ENCODE measurements at regions of chr9 and their contacts with region 1.

Region 1: GRCh38 chr9:129968690-129969501 is 74.1 kb downstream of the FNBP1 start:
- DNase-seq: peak; percentile 84
- H3K4me3 ChIP-seq: no peak overlapping the region
- H3K27ac ChIP-seq: peak overlapping the region; percentile 100
- H3K4me1 ChIP-seq: peaks cover 68% of the 10 kb centered on the region
- H3K27me3 ChIP-seq: no peaks in the 10 kb centered on the region
- CTCF ChIP-seq: no peak

Region 2: GRCh38 chr9:129900263-129901027 is 68.5 kb before region 1 on chr9:
- CTCF ChIA-PET with region 1: no interaction called
- POLR2A ChIA-PET with region 1: no interaction called
- intact Hi-C with region 1: loop called (anchors 5 kb)
- DNase-seq: no peak
- H3K4me3 ChIP-seq: no peak overlapping the region
- H3K27ac ChIP-seq: peak overlapping the region; percentile 57
- H3K4me1 ChIP-seq: peaks cover 11% of the 10 kb centered on the region
- H3K27me3 ChIP-seq: no peaks in the 10 kb centered on the region
- CTCF ChIP-seq: no peak

Region 3: DNA sequence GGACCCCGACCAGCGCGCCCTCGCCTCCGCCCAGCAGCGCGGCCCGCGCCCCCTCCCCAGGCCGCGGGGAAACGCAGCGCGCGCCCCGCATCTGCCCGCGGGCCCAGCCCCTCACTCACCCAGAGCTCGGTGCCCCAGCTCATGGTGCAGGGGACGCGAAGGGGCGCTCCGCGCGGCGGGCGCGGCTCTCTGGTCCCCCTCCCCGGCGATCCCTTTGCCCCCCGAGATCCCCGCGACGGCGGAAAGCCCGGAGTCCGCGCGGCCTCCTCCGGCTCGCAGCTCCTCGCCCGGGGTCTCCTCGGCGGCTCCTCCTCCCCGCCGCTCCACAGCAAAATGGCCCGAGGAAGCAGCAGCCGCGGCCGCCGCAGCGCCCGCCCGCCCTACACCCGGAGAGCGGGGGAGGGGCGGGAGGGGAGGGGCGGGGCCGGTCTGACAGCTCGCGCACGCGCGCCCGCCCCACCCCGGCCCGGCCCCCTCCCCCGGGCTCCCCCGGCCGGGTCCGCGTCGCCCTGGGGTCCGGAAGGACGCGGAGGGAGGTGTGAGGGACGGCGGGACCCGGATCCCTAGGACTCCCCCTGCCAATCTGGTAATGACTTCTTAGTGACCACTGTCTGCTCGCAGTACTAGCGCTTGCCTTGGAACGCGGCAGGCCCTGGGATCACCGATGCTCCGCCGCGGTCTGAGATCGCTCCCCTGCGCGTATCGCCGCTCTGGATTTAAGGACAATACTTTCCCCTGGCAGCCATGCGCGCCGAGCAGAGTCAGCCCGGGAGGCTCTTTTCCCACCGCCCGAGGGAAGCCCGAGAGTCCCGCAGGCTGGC is 74.1 kb after region 1 on chr9 and contains the start of gene FNBP1:
- CTCF ChIA-PET with region 1: no interaction called
- POLR2A ChIA-PET with region 1: interaction called, 6 read pairs
- intact Hi-C with region 1: loop called (anchors 5 kb)
- DNase-seq: peak; percentile 90
- H3K4me3 ChIP-seq: peak within 1 kb of the TSS; percentile 95
- H3K27ac ChIP-seq: peak within 1 kb of the TSS; percentile 97
- H3K4me1 ChIP-seq: peaks cover 56% of the 10 kb centered on the region
- H3K27me3 ChIP-seq: no peaks in the 10 kb centered on the region
- CTCF ChIP-seq: no peak
- total RNA-seq, gene FNBP1: 200 and 215 TPM in 2 replicates

Measured in A673 (cell line).